ENCODE measurements at regions of chr5 and their contacts with region 1.

Region 1: GRCh38 chr5:119274767-119275130 is 81.1 kb upstream of the TNFAIP8 start:
- DNase-seq: no peak
- ATAC-seq: peak; percentile 23
- H3K4me3 ChIP-seq: peak overlapping the region; percentile 65; the same call in 1 of the 2 replicates
- H3K27ac ChIP-seq: peak overlapping the region; percentile 77
- H3K4me1 ChIP-seq: peaks cover 66% of the 10 kb centered on the region
- H3K27me3 ChIP-seq: no peaks in the 10 kb centered on the region
- CTCF ChIP-seq: no peak
- EP300 ChIP-seq: no peak
- POLR2A ChIP-seq: no peak
- RAD21 ChIP-seq: no peak

Region 2: GRCh38 chr5:119309326-119309725 is 34.6 kb after region 1 on chr5:
- CTCF ChIA-PET with region 1: interaction called, 6 read pairs
- POLR2A ChIA-PET with region 1: interaction called, 4 read pairs
- RAD21 ChIA-PET with region 1: interaction called, 8 read pairs
- SMC1A ChIA-PET with region 1: interaction called, 79 read pairs
- in situ Hi-C with region 1: no loop called
- intact Hi-C with region 1: loop called (anchors 2 kb)
- DNase-seq: no peak
- ATAC-seq: peak; percentile 18
- H3K4me3 ChIP-seq: 0 out of 2 replicates have a peak overlapping the region, but pooled peaks have one; percentile 1
- H3K27ac ChIP-seq: peak overlapping the region; percentile 72
- H3K4me1 ChIP-seq: peaks cover 41% of the 10 kb centered on the region
- H3K27me3 ChIP-seq: no peaks in the 10 kb centered on the region
- CTCF ChIP-seq: no peak
- EP300 ChIP-seq: no peak
- POLR2A ChIP-seq: no peak
- RAD21 ChIP-seq: no peak

Region 3: DNA sequence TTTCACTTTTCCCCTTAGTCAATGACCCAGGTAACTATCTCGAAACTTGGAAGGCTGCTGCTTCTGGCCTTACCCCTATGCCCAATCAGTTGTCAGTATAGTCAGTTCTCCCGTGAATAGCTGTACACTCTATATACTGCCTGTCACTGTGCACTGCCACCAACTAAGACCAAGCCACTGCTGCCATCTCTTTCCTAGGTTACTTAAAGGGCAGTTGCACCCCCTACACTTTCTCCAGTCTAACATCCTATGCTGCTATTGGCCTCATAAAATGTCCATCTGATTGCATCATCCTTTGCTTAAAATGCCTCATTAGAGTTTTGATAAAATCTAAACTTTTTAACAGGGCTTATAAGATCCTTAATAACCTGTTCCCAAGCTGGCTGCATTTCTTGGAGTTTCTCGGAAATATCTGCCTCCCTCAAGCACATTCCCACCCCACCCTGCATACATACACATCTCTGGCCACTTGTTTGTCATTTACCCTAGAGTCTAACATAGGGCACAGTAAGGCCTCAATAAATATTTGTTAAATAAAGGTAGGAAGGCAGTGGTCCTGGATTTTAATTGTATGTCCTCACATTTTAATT is 48.3 kb after region 1 on chr5:
- CTCF ChIA-PET with region 1: interaction called, 4 read pairs
- POLR2A ChIA-PET with region 1: interaction called, 5 read pairs
- RAD21 ChIA-PET with region 1: interaction called, 14 read pairs
- SMC1A ChIA-PET with region 1: interaction called, 7 read pairs
- in situ Hi-C with region 1: no loop called
- intact Hi-C with region 1: no loop called
- DNase-seq: no peak
- ATAC-seq: peak; percentile 64
- H3K4me3 ChIP-seq: peak overlapping the region; percentile 26; the same call in 1 of the 2 replicates
- H3K27ac ChIP-seq: peak overlapping the region; percentile 87
- H3K4me1 ChIP-seq: peaks cover 52% of the 10 kb centered on the region
- H3K27me3 ChIP-seq: no peaks in the 10 kb centered on the region
- CTCF ChIP-seq: no peak
- EP300 ChIP-seq: no peak
- POLR2A ChIP-seq: no peak
- RAD21 ChIP-seq: no peak

Region 4: GRCh38 chr5:119328753-119329602 is 54.2 kb after region 1 on chr5:
- CTCF ChIA-PET with region 1: interaction called, 4 read pairs
- POLR2A ChIA-PET with region 1: interaction called, 59 read pairs
- RAD21 ChIA-PET with region 1: interaction called, 14 read pairs
- SMC1A ChIA-PET with region 1: interaction called, 175 read pairs
- in situ Hi-C with region 1: no loop called
- intact Hi-C with region 1: no loop called
- DNase-seq: no peak
- ATAC-seq: no peak
- H3K4me3 ChIP-seq: no peak overlapping the region
- H3K27ac ChIP-seq: peak overlapping the region; percentile 7; the same call in 1 of the 2 replicates
- H3K4me1 ChIP-seq: peaks cover 48% of the 10 kb centered on the region
- H3K27me3 ChIP-seq: no peaks in the 10 kb centered on the region
- CTCF ChIP-seq: no peak
- EP300 ChIP-seq: no peak
- POLR2A ChIP-seq: no peak
- RAD21 ChIP-seq: no peak

Region 5: DNA sequence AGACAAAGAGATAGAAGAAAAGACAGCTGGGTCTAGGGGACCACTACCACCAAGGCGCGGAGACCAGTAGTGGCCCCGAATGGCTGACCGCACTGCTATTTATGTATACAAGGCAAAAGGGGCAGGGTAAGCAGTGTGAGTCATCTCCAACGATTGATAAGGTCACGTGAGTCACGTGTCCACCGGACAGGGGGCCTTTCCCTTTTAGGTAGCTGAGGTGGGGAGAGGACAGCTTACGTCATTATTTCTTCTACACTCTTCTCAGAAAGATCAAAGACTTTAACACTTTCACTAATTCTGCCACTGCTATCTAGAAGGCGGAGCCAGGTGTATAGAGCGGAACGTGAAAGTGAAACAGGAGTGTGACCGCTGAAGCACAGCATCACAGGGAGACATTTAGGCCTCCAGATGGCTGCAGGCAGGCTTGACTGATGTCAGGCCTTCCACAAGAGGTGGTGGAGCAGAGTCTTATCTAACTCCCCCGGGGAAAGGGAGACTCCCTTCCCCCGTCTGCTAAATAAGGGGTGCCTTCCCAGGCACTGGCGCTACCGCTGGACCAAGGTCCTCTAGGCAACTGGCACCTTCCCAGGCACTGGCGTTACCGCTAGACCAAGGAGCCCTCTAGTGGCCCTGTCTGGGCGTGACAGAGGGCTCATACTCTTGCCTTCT is 1183.2 kb after region 1 on chr5:
- CTCF ChIA-PET with region 1: no interaction called
- POLR2A ChIA-PET with region 1: no interaction called
- RAD21 ChIA-PET with region 1: no interaction called
- SMC1A ChIA-PET with region 1: no interaction called
- in situ Hi-C with region 1: loop called (anchors 25 kb)
- intact Hi-C with region 1: no loop called
- DNase-seq: peak; percentile 85
- ATAC-seq: peak; percentile 95
- H3K4me3 ChIP-seq: no peak overlapping the region
- H3K27ac ChIP-seq: peak overlapping the region; percentile 53; the same call in 1 of the 2 replicates
- H3K4me1 ChIP-seq: no peaks in the 10 kb centered on the region
- H3K27me3 ChIP-seq: no peaks in the 10 kb centered on the region
- CTCF ChIP-seq: peak; percentile 38 to 75 (median 61)
- EP300 ChIP-seq: peak; percentile 15 to 52; a peak in 1 of 4 replicates
- POLR2A ChIP-seq: no peak
- RAD21 ChIP-seq: peak; percentile 34; the same call in 1 of the 2 replicates